ENCODE measurements at regions of chr7 and their contacts with region 1.

Region 1: DNA sequence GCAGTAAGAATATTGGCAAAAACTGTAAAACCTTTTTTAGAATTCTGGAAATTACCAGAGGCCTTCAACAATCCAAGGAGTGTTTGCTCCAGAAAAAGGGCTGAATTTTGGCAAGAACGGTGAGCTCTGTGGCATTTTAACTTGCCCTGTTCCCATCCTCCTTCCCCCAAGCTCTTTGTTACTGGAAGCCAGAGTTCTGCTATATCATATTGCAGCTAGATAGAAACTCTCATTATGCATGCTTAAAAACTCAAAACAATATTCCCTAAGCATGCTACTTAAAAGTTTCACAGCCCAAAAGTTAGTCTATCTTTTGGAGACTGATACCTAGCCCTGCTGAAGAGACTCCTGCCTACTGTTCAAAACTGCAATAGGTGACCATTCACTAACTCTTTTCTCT is 70.6 kb upstream of the GPR37 start:
- DNase-seq: no peak

Region 2: DNA sequence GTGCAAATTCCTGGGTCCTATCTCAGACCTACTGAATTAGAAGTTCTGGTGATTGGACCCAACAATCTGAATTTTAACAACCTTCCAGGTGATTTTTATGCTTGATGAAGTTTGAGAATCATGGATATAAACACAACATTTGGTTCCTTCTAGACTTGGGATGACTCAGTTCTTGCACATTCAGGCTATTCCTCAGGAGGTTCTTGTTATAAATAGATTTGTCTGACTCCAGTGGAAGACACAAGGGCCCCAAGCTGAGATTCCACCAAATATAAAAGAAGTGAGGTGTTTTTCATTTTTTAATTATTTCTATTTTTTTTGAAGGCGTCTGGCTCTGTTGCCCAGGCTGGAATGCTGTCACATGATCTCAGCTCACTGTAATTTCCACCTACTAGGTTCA is 1831.2 kb before region 1 on chr7:
- intact Hi-C with region 1: loop called in 1 of 2 experiments (anchors 10 kb)
- DNase-seq: no peak

Region 3: DNA sequence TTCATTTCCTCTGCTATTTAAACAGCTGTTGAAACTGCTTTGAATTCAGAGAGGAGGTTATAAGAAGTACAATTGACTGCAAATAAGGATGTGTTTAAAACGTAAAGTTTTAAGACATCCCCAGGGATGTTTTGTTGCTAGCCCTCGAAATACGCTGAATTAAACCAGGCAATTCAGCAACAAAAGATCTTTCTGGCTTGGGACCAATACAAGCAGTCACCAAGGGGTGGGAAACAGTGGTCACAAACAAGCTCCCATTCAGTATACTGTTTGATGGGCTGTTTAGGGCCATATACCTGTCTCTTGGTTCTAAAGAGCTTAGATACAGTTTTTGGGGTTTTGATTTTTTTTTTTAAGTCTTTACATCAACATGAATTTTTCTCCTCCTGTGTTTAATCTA is 539.8 kb after region 1 on chr7:
- intact Hi-C with region 1: no loop called
- DNase-seq: no peak

Measured in posterior vena cava (tissue), 2 donors.